ENCODE measurements at regions of chr4 and their contacts with region 1.

Region 1: DNA sequence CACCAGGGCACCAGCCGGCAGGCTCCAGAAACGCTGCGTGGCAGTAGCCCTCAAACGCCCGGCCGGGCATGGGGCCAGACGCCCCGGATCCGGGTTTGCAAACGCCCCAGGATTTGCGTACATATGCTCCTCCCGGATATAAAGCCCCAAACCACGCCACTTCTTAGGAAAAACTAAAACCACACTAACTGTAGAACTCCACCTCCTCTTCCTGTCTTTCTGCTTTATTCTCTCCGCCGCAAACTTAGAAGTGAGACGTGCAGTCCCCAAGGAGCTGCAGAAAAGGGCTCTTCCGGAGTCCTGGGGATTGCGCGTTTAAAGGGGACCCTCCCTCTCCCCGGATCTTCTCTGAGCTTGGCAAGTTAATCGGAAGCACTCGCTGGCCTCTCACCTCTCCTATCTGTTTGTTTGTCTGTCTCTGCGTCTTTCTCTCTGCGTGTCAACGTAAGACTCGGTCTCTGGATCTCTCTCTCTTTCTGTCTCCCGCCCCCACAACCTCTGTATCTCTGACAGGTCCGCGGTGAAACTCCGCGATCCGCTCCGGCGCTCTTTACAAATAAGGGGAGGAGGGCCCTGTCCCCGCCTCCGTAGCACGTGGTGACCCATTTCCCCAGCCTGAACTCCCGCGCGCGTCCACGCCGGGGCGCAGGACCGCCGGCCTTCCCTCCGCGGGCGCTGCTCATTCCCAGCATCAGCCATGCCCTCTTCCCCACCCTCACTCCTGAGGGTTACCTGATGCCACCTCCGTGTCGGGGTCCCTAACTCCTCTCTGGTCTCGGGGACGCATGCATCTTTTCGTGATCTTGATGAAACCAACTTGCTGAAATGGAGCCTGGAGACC is at the start of gene SLC39A8:
- DNase-seq: peak; percentile 93
- H3K4me3 Mint-ChIP-seq: peak within 1 kb of the TSS; percentile 83
- H3K27ac Mint-ChIP-seq: peak within 1 kb of the TSS; percentile 93
- H3K4me1 Mint-ChIP-seq: peaks cover 38% of the 10 kb centered on the region
- H3K27me3 Mint-ChIP-seq: no peaks in the 10 kb centered on the region
- total RNA-seq, gene SLC39A8: 28.8 to 29.3 TPM

Region 2: DNA sequence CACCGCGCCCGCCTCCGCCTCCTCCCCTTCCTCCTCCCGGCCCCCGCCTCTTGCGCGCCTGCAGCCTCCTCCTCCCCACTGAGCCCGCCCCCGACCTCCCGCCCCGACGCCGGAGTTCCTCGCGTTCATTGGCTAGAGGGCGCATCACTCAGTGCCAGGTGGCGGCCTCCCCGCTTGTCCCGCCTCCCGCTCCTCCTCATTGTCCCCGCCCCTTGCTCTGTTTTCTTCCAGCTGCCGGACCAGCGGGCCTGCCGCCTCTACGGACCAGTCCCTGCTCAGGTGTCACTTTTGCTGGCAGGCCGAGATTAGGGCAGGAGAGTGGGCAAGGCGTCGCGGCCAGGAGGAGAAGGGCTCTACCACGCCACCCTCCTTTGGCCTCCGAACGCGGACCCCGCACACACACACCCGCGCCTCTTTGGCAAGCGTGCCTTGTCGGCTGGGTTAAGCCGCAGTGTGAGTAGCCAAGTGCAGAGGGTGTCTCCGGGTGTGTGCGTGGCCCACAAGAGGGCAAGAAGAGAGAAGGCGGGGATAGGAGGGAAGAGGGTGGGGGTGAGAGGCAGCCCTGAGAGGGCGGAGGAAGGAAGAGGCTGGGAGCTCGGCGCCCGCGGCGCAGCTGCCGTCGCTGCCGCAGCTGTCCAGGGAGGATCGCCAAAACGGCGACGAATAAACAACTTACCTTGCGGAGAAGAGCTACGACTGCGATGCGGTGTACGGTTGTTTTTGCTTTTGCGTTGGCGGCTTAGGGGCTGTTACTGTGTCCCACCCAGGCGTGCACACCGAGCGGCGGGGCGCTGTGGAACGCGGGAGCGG is 997.4 kb before region 1 on chr4:
- CTCF ChIA-PET with region 1: no interaction called
- intact Hi-C with region 1: loop called (anchors 1 kb)
- DNase-seq: peak; percentile 99
- H3K4me3 Mint-ChIP-seq: peak overlapping the region; percentile 95
- H3K27ac Mint-ChIP-seq: peak overlapping the region; percentile 82
- H3K4me1 Mint-ChIP-seq: peaks cover 22% of the 10 kb centered on the region
- H3K27me3 Mint-ChIP-seq: peaks cover 31% of the 10 kb centered on the region

Region 3: DNA sequence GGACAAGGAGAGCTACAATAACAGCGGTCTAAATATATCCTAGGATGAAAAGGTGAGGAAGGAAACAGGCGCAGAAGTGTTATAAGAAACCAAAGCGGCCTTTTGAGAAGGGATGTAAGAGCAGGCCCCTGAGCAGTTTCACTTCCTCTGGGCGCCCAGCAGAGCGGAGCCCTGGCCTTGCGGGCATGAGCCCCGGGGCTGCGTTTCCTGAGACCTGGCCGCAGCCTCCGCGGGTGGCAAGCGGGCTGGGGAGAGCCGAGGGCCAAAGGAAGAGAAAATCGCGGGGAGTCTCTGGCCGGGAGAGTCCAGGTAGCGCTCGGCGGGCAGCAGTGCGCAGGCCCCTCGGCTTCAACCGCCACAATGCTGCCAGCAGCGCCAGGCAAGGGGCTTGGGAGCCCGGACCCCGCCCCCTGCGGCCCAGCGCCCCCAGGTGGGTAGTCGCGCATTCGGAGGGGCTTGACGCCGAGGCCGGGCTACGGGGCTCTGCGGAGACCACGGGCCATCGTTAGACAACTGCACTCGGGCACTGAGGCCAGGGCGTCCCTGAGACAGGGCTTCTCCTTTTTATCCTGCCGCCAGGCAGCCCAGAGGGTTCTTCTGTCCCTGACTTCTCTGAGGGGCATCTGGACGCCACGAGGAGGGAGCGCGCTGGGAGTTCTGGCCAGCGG is 554.5 kb before region 1 on chr4 and contains the start of gene BANK1:
- CTCF ChIA-PET with region 1: no interaction called
- intact Hi-C with region 1: no loop called
- DNase-seq: peak; percentile 14
- H3K4me3 Mint-ChIP-seq: peak within 1 kb of the TSS; percentile 57
- H3K27ac Mint-ChIP-seq: no peak within 1 kb of the TSS
- H3K4me1 Mint-ChIP-seq: peaks cover 9% of the 10 kb centered on the region
- H3K27me3 Mint-ChIP-seq: peaks cover 35% of the 10 kb centered on the region
- total RNA-seq, gene BANK1: 0.07 to 0.17 TPM

Region 4: GRCh38 chr4:102234243-102234838 is 110.8 kb before region 1 on chr4:
- CTCF ChIA-PET with region 1: no interaction called
- intact Hi-C with region 1: no loop called
- DNase-seq: no peak
- H3K4me3 Mint-ChIP-seq: no peak overlapping the region
- H3K27ac Mint-ChIP-seq: no peak overlapping the region
- H3K4me1 Mint-ChIP-seq: no peaks in the 10 kb centered on the region
- H3K27me3 Mint-ChIP-seq: no peaks in the 10 kb centered on the region

Region 5: DNA sequence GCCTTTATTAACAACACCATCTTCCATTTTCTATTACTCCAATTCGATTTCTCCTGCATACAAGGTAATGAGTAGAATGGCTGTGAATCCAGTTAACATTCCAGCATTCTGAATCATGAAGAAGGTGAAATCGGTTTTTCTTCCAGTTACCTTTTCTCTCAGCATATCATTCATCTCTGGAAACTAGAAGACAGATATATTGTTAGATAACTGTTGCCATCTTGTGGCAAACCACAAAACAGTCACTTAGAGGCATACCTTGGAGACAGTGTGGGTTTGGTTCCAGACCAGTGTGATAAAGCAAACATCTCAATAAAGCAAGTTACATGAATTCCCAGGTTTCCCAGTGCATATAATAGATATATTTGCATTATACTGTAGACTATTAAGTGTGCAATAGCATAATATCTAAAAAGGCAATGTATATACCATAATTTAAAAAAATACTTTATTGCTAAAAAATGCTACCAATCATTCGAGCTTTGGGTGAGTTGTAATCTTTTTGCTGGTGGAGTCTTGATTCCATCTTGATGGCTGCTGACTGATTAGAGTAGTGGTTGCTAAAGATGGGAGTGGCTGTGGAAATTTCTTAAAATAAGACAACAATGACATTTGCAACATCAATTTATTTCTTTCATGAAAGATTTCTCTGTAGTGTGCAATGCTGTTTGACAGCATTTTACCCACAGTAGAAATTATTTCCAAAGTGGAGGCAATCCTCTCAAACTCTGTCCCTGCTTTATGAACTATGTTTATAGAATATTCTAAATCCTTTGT is 82.0 kb before region 1 on chr4:
- CTCF ChIA-PET with region 1: no interaction called
- intact Hi-C with region 1: loop called (anchors 2 kb)
- DNase-seq: peak; percentile 22
- H3K4me3 Mint-ChIP-seq: no peak overlapping the region
- H3K27ac Mint-ChIP-seq: no peak overlapping the region
- H3K4me1 Mint-ChIP-seq: peaks cover 3% of the 10 kb centered on the region
- H3K27me3 Mint-ChIP-seq: no peaks in the 10 kb centered on the region

Region 6: GRCh38 chr4:102500696-102501446 is 155.7 kb after region 1 on chr4 and contains the start of gene NFKB1:
- CTCF ChIA-PET with region 1: no interaction called
- intact Hi-C with region 1: loop called (anchors 1 kb)
- DNase-seq: peak; percentile 90
- H3K4me3 Mint-ChIP-seq: peak within 1 kb of the TSS; percentile 96
- H3K27ac Mint-ChIP-seq: peak within 1 kb of the TSS; percentile 96
- H3K4me1 Mint-ChIP-seq: peaks cover 16% of the 10 kb centered on the region
- H3K27me3 Mint-ChIP-seq: no peaks in the 10 kb centered on the region
- total RNA-seq, gene NFKB1: 121 to 134 TPM

Region 7: DNA sequence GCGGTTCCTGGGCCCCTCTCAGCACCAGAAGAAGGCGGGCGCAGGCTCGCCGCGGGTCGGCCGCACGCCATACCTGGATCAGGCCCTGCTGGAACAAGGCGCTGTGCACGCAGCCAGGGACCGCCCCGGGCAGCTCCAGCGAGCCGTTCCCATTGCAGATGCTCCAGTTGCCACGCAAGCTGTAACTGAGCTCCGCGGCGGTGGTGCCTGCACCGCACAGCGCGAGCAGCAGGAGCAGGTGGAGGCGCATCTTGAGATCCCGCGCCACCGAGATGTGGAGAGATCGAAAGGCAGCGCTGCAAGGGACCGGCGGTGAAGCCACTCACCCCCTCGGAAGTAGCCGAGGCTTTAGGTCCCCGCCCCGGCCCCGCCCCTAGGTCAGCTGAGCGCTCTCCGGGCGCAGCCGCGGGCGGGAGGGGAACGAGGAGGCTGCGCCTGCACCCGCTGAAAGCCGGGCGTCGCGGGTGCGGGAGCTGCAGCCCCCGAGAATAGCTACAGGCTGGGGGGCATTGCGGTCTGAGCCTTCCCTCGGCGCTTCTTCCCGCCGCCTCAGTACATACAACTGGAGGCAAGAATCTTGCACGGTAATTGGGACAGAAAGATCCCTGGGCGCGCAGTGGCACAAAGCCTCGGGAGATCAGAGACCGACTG is 415.6 kb after region 1 on chr4 and contains the start of gene MANBA:
- CTCF ChIA-PET with region 1: no interaction called
- intact Hi-C with region 1: loop called (anchors 1 kb)
- DNase-seq: peak; percentile 89
- H3K4me3 Mint-ChIP-seq: peak within 1 kb of the TSS; percentile 88
- H3K27ac Mint-ChIP-seq: peak within 1 kb of the TSS; percentile 36
- H3K4me1 Mint-ChIP-seq: peaks cover 27% of the 10 kb centered on the region
- H3K27me3 Mint-ChIP-seq: no peaks in the 10 kb centered on the region
- total RNA-seq, gene MANBA: 9.8 to 11.0 TPM

Region 8: DNA sequence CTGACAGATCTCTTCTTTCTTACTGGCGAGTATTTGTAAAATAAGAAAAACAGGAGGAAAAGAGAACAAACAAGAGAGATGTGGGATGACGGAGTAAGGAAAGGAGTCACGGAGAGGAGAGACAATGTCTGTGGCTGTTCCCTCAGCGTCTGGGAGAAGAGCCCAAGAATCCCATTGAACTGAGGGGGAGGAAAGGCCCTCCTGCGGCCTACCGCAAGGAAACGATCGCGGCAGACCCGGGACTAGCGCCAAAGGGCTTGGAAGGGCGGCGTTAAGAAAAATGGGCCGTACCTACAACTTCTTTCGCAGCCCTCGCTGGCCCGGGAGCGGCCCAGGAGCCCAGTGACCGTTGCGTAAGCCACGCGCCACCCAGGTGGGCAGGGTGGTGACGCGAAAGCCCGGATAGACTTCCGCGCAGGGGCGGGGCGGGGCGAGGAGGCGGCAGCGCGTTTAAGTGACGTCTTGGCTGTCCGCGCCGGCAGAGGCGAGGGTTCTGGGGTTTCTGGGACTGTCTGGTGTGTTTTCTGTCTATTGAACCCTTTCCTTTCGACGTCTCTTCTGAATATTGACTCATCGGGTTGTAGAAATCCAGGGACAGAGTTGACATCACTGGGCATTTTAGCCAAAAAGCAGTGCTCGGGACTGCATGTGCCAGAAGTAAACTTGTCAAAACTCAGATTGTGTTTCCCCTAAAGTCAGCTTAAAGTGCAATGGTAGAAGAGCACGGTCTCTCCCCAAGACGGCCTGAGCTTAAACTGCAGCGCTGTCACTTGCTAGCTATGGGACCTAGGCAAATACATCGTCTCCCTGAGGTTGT is 674.3 kb after region 1 on chr4 and contains the start of gene SLC9B1:
- CTCF ChIA-PET with region 1: no interaction called
- intact Hi-C with region 1: loop called (anchors 1 kb)
- DNase-seq: peak; percentile 96
- H3K4me3 Mint-ChIP-seq: peak within 1 kb of the TSS; percentile 96
- H3K27ac Mint-ChIP-seq: peak within 1 kb of the TSS; percentile 97
- H3K4me1 Mint-ChIP-seq: peaks cover 20% of the 10 kb centered on the region
- H3K27me3 Mint-ChIP-seq: no peaks in the 10 kb centered on the region
- total RNA-seq, gene SLC9B1: 2.0 to 3.5 TPM

Region 9: DNA sequence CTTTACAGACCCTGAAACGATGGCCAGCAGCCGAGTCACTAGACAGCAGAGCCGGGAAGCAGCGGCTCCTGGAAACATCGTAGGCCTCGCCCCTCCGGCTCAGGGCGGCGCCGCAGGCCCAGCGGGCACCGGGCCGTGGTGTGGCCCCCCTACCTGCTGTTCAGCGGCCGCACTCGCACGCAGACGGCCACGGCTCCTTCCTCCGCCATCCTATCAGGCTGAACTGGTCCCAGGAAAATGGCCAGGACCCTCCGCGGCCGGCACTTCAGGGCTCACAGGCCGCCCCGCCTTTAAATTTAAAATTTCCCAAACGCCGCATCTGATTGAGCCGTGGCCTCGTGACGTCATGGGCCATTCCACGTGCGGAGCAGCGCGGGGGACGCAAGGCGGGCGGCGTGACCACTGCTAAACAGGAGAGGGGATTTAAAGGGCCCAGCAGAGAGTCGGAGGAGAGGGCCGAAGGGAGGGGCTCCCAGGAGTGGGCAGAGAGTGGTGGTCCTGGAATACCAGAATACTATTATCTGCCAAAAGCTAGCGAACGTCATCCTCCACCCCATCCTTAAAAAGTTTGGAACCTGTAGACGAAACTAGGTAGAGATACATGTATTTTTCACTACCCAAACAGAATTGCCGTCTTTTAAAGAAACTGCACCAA is 853.1 kb after region 1 on chr4 and contains the start of gene CENPE:
- CTCF ChIA-PET with region 1: no interaction called
- intact Hi-C with region 1: loop called (anchors 1 kb)
- DNase-seq: peak; percentile 89
- H3K4me3 Mint-ChIP-seq: peak within 1 kb of the TSS; percentile 87
- H3K27ac Mint-ChIP-seq: peak within 1 kb of the TSS; percentile 89
- H3K4me1 Mint-ChIP-seq: peaks cover 7% of the 10 kb centered on the region
- H3K27me3 Mint-ChIP-seq: peaks cover 3% of the 10 kb centered on the region
- total RNA-seq, gene CENPE: 38.1 to 45.2 TPM